ENCODE measurements at regions of chr12 and their contacts with region 1.

Region 1: DNA sequence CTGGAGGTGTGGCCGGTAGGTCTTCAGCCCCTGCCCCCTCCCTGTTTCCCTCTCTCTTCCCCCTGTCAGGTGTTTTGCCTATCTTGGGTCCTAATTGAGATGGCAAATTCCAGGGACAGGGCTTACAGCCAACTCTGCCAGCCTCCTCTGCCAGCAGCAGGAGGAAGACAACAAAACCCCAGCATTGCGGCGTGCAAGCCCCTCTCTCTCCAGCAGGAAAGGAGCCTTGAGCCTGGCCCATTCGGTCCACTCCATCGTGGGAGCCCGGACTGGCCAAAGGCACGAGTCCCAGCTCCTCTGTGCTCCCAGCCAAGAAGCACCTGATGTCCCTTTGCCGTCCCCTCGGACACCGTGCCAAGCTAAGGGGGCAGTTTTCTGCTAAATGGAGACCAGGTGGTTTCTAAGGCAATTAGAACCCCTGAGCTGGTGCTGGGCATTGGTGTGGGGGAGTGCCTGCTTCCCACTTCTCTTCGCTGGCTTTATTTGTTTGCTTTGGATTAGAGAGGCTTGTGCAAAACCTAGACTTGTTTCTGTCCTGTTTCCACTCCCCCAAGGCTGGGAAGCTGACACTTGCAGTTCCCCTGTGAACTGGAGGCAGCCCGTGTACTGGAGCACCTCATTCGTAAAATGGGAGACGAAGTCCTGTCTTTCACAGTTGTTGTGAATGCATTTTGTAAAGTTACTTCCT is 57.1 kb upstream of the LHX5 start:
- DNase-seq: no peak
- ATAC-seq: peak in 1 of 2 experiments; percentile 18; a peak in 2 of 6 replicates
- H3K4me3 ChIP-seq: no peak overlapping the region
- H3K27ac ChIP-seq: no peak overlapping the region
- H3K4me1 ChIP-seq: no peaks in the 10 kb centered on the region
- CTCF ChIP-seq: no peak
- EP300 ChIP-seq: no peak
- POLR2A ChIP-seq: no peak
- RAD21 ChIP-seq: no peak

Region 2: DNA sequence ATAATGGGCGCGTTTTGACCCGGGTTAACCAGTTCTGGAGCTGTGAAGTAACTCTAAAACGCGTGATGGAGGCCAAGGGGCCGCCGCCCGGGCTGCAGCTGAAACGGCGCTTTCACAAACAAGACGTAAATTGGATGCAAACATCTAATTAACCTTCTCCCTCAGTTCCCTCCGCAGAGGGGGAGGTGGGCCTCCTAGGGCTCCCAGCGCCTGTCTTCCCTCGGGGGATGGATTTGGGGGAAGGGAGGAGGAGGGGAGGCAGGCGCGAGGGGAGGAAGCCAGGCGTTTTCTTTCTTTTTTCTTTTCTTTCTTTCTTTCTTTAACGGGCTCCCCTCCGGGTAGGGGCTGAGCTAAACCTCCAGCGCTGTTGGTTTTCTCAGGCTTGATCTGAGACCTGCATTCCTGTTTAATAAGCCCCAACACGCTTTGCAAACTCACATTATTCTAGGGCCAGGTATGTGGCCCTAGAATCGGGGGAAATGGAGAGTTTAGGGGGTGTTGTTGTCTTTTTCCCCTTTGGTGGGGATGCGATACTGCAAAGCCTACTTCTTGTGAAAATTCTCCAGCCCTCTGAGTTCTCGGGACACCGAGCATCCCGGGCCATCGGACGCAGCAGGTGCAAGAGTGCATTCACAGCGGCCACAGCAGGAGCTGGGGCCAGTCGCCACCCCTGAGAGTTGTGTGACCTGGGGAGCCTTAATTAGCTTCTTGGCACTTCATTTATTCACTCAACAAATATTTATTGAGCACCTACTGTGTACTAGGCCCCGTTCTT is 13.5 kb before region 1 on chr12:
- CTCF ChIA-PET with region 1: no interaction called
- POLR2A ChIA-PET with region 1: no interaction called
- DNase-seq: no peak
- ATAC-seq: peak in 1 of 2 experiments; percentile 39; a peak in 2 of 6 replicates
- H3K4me3 ChIP-seq: no peak overlapping the region
- H3K27ac ChIP-seq: no peak overlapping the region
- H3K4me1 ChIP-seq: no peaks in the 10 kb centered on the region
- CTCF ChIP-seq: no peak
- EP300 ChIP-seq: no peak
- POLR2A ChIP-seq: no peak
- RAD21 ChIP-seq: no peak

Region 3: GRCh38 chr12:113546916-113547863 is 18.4 kb after region 1 on chr12:
- CTCF ChIA-PET with region 1: no interaction called
- POLR2A ChIA-PET with region 1: interaction called, 12 read pairs
- DNase-seq: no peak
- ATAC-seq: no peak; a peak in 1 of 6 replicates
- H3K4me3 ChIP-seq: no peak overlapping the region
- H3K27ac ChIP-seq: no peak overlapping the region
- H3K4me1 ChIP-seq: no peaks in the 10 kb centered on the region
- CTCF ChIP-seq: no peak
- EP300 ChIP-seq: no peak
- POLR2A ChIP-seq: no peak
- RAD21 ChIP-seq: no peak

Region 4: DNA sequence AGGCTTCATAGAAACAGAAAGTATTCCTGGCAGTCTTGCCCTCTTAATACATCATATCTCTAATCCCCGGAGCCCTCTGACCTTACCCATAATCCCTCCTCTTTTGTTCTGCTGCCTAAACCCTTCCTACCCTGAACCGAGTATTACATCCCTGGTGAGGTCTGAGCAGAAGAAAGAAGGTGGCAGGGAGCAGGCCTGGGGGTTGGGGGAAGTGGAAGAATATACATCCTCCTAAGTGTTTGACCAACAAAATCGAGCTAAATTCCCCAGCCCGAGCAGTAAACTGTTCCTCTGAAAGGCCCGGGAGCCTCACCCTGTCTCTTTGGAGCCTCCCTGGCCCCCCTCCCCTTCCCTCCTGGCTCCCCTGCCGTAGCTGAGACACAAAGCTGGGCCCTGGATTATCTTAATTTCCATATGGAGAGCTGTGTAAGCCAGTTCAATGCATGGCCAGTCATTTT is 135.5 kb after region 1 on chr12:
- CTCF ChIA-PET with region 1: no interaction called
- POLR2A ChIA-PET with region 1: no interaction called
- DNase-seq: no peak
- ATAC-seq: no peak
- H3K4me3 ChIP-seq: no peak overlapping the region
- H3K27ac ChIP-seq: no peak overlapping the region
- H3K4me1 ChIP-seq: no peaks in the 10 kb centered on the region
- CTCF ChIP-seq: no peak
- EP300 ChIP-seq: no peak
- POLR2A ChIP-seq: no peak
- RAD21 ChIP-seq: no peak

Measured in A549 (cell line).